CD8-positive, alpha-beta T cell (primary cell): ENCODE measurements at regions of chr2 and their contacts with region 1.

Region 1: DNA sequence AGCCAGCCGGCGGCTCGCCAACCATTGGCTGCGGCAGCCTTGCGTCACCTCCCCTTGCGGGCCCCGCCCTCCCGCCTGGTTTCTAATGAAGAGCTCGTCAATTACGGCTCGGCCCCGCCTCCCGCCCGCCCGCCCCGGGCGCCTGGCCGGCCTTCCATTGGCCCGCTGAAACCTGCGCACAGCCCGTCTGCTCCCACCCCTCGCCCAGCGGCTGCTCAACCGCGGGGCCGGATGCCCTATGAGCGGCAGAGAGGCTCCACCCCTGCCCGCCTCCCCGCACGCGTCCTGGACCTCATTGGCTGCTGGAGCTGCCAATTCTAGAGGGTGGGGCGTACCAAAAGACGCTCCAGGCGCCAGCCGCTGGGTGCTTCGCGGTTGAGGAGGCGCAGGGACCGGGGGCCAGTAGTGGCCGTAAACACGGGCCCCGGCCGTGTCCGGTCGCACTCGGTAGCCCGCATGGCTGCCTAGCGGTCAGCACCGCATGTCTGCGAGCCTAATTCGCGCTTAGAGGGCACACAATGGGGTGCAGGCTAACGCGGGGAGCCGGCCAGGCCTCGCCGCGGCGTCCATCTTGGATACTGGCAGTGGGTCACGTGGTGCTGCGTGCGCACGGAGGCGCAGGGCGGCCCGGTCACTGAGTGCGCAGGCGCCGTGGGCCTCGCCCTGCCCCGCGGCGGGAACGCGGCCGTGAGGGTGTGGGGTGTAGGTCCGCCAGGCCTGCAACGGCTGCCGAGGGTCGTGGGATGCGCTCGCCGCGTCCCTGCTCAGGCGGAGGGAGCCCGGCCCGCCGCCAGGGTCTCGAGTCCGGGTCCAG is 454 bp upstream of the HDAC4 start:
- DNase-seq: peak; percentile 99 to 100 (median 99)
- ATAC-seq: peak; percentile 88
- H3K4me3 ChIP-seq: peak overlapping the region; percentile 95 to 96
- H3K4me3 Mint-ChIP-seq: peak overlapping the region; percentile 93
- H3K27ac ChIP-seq: peak overlapping the region; percentile 99 to 100
- H3K27ac Mint-ChIP-seq: peak overlapping the region; percentile 98
- H3K4me1 ChIP-seq: peaks cover 18% of the 10 kb centered on the region
- H3K4me1 Mint-ChIP-seq: peaks cover 43% of the 10 kb centered on the region
- H3K27me3 ChIP-seq: no peaks in the 10 kb centered on the region
- H3K27me3 Mint-ChIP-seq: no peaks in the 10 kb centered on the region
- CTCF ChIP-seq: no peak

Region 2: GRCh38 chr2:239143858-239144718 is 257.2 kb before region 1 on chr2:
- CTCF ChIA-PET with region 1: interaction called, 14 read pairs
- POLR2A ChIA-PET with region 1: no interaction called
- intact Hi-C with region 1: loop called (anchors 1 to 2 kb)
- DNase-seq: peak in 7 of 9 experiments; percentile 4 to 63 (median 41)
- ATAC-seq: peak; percentile 54
- H3K4me3 ChIP-seq: no peak overlapping the region
- H3K4me3 Mint-ChIP-seq: no peak overlapping the region
- H3K27ac ChIP-seq: no peak overlapping the region
- H3K27ac Mint-ChIP-seq: no peak overlapping the region
- H3K4me1 ChIP-seq: no peaks in the 10 kb centered on the region
- H3K4me1 Mint-ChIP-seq: peaks cover 8% of the 10 kb centered on the region
- H3K27me3 ChIP-seq: no peaks in the 10 kb centered on the region
- H3K27me3 Mint-ChIP-seq: no peaks in the 10 kb centered on the region
- CTCF ChIP-seq: peak; percentile 55

Region 3: GRCh38 chr2:239298116-239298804 is 103.0 kb before region 1 on chr2:
- CTCF ChIA-PET with region 1: interaction called, 6 read pairs
- POLR2A ChIA-PET with region 1: interaction called, 4 read pairs
- intact Hi-C with region 1: loop called in 1 of 2 experiments (anchors 1 kb)
- DNase-seq: peak; percentile 52 to 93 (median 76)
- ATAC-seq: peak; percentile 86
- H3K4me3 ChIP-seq: peak overlapping the region; percentile 34 to 53
- H3K4me3 Mint-ChIP-seq: peak overlapping the region; percentile 84
- H3K27ac ChIP-seq: peak overlapping the region; percentile 34 to 68
- H3K27ac Mint-ChIP-seq: peak overlapping the region; percentile 94
- H3K4me1 ChIP-seq: peaks cover 73% of the 10 kb centered on the region
- H3K4me1 Mint-ChIP-seq: peaks cover 71% of the 10 kb centered on the region
- H3K27me3 ChIP-seq: no peaks in the 10 kb centered on the region
- H3K27me3 Mint-ChIP-seq: no peaks in the 10 kb centered on the region
- CTCF ChIP-seq: peak; percentile 50

Region 4: GRCh38 chr2:239369631-239370161 is 31.6 kb before region 1 on chr2:
- CTCF ChIA-PET with region 1: no interaction called
- POLR2A ChIA-PET with region 1: no interaction called
- intact Hi-C with region 1: loop called in 1 of 2 experiments (anchors 1 kb)
- DNase-seq: peak; percentile 34 to 93 (median 67)
- ATAC-seq: peak; percentile 94
- H3K4me3 ChIP-seq: peak overlapping the region; percentile 15 to 24
- H3K4me3 Mint-ChIP-seq: peak overlapping the region; percentile 63
- H3K27ac ChIP-seq: peak overlapping the region; percentile 71 to 84
- H3K27ac Mint-ChIP-seq: no peak overlapping the region
- H3K4me1 ChIP-seq: peaks cover 33% of the 10 kb centered on the region
- H3K4me1 Mint-ChIP-seq: peaks cover 20% of the 10 kb centered on the region
- H3K27me3 ChIP-seq: no peaks in the 10 kb centered on the region
- H3K27me3 Mint-ChIP-seq: no peaks in the 10 kb centered on the region
- CTCF ChIP-seq: no peak

Region 5: GRCh38 chr2:240021488-240022104 is 620.3 kb after region 1 on chr2:
- CTCF ChIA-PET with region 1: no interaction called
- POLR2A ChIA-PET with region 1: no interaction called
- intact Hi-C with region 1: loop called (anchors 2 to 5 kb)
- DNase-seq: peak; percentile 15 to 72 (median 64)
- ATAC-seq: peak; percentile 35
- H3K4me3 ChIP-seq: no peak overlapping the region
- H3K4me3 Mint-ChIP-seq: no peak overlapping the region
- H3K27ac ChIP-seq: no peak overlapping the region
- H3K27ac Mint-ChIP-seq: no peak overlapping the region
- H3K4me1 ChIP-seq: peaks cover 14% of the 10 kb centered on the region
- H3K4me1 Mint-ChIP-seq: peaks cover 29% of the 10 kb centered on the region
- H3K27me3 ChIP-seq: no peaks in the 10 kb centered on the region
- H3K27me3 Mint-ChIP-seq: no peaks in the 10 kb centered on the region
- CTCF ChIP-seq: peak; percentile 82

Region 6: GRCh38 chr2:240560480-240561326 is 1159.4 kb after region 1 on chr2:
- CTCF ChIA-PET with region 1: no interaction called
- POLR2A ChIA-PET with region 1: no interaction called
- intact Hi-C with region 1: loop called in 1 of 2 experiments (anchors 10 kb)
- DNase-seq: peak; percentile 98 to 100 (median 100)
- ATAC-seq: peak; percentile 59
- H3K4me3 ChIP-seq: peak overlapping the region; percentile 74 to 76
- H3K4me3 Mint-ChIP-seq: peak overlapping the region; percentile 89
- H3K27ac ChIP-seq: peak overlapping the region; percentile 82 to 84
- H3K27ac Mint-ChIP-seq: peak overlapping the region; percentile 96
- H3K4me1 ChIP-seq: peaks cover 80% of the 10 kb centered on the region
- H3K4me1 Mint-ChIP-seq: peaks cover 71% of the 10 kb centered on the region
- H3K27me3 ChIP-seq: no peaks in the 10 kb centered on the region
- H3K27me3 Mint-ChIP-seq: no peaks in the 10 kb centered on the region
- CTCF ChIP-seq: no peak